Kidney (tissue), 22 donors: ENCODE measurements at regions of chr21 and their contacts with region 1.

Region 1: GRCh38 chr21:45129189-45129923 is 55.0 kb downstream of the ADARB1 start:
- DNase-seq: no peak
- H3K4me3 ChIP-seq: no peak overlapping the region
- H3K27ac ChIP-seq: peak overlapping the region; percentile 79 to 85
- H3K4me1 ChIP-seq: peaks cover 0 to 16% (median 5%) of the 10 kb centered on the region in 3 donors
- H3K27me3 ChIP-seq: no peaks in the 10 kb centered on the region
- CTCF ChIP-seq: no peak

Region 2: GRCh38 chr21:44949779-44950198 is 179.6 kb before region 1 on chr21:
- intact Hi-C with region 1: loop called (anchors 5 kb)
- DNase-seq: peak; percentile 76 to 94 (median 84)
- H3K4me3 ChIP-seq: no peak overlapping the region
- H3K27ac ChIP-seq: no peak overlapping the region
- H3K4me1 ChIP-seq: peaks cover 0 to 5% (median 0%) of the 10 kb centered on the region in 3 donors
- H3K27me3 ChIP-seq: no peaks in the 10 kb centered on the region
- CTCF ChIP-seq: peak; percentile 90

Region 3: GRCh38 chr21:45554477-45555175 is 425.3 kb after region 1 on chr21:
- intact Hi-C with region 1: no loop called
- DNase-seq: peak; percentile 84 to 94 (median 89)
- H3K4me3 ChIP-seq: peak overlapping the region; percentile 68 to 86 (median 82)
- H3K27ac ChIP-seq: peak overlapping the region; percentile 63 to 81
- H3K4me1 ChIP-seq: peaks cover 0 to 2% (median 0%) of the 10 kb centered on the region in 3 donors
- H3K27me3 ChIP-seq: no peaks in the 10 kb centered on the region
- CTCF ChIP-seq: peak; percentile 82